Dorsolateral prefrontal cortex (tissue), 120 donors: ENCODE measurements at regions of chr1 and their contacts with region 1.

Region 1: GRCh38 chr1:153220606-153221303 is 3.4 kb downstream of the PRR9 start:
- DNase-seq: peak in 6 of 10 donors; percentile 5 to 48 (median 42)
- H3K4me3 ChIP-seq: no peak overlapping the region
- H3K27ac ChIP-seq: peak overlapping the region in 1 of 59 donors; percentile 22
- H3K27me3 ChIP-seq: peaks cover 0 to 5% (median 0%) of the 10 kb centered on the region in 45 donors
- CTCF ChIP-seq: peak in 10 of 56 donors; percentile 9 to 45 (median 20)

Region 2: DNA sequence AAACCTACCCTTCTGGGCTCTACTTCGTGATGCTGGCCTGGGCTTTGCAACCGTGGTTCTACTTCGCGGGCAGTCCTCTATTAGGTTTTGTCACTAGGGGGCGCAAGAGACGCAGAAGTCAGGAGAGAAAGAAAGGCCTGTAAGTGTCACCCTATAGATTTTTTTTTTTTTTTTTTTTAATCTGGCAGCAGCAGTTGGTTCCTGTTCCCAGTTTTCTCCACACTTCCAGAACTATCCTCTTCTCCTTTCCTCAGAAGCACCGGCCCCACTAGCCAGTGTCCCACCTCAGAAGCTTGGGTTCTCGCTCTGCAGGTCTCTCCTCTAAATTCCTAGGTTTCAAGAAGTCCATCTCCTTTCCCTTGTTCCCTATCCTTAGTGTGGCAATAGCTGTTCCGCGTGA is 566.6 kb before region 1 on chr1:
- intact Hi-C with region 1: loop called in 1 of 2 experiments (anchors 5 kb)
- DNase-seq: peak in 8 of 10 donors; percentile 6 to 70 (median 45)
- H3K4me3 ChIP-seq: no peak overlapping the region
- H3K27ac ChIP-seq: no peak overlapping the region
- H3K27me3 ChIP-seq: peaks cover 0 to 6% (median 0%) of the 10 kb centered on the region in 45 donors
- CTCF ChIP-seq: peak; percentile 20 to 74 (median 60)

Region 3: DNA sequence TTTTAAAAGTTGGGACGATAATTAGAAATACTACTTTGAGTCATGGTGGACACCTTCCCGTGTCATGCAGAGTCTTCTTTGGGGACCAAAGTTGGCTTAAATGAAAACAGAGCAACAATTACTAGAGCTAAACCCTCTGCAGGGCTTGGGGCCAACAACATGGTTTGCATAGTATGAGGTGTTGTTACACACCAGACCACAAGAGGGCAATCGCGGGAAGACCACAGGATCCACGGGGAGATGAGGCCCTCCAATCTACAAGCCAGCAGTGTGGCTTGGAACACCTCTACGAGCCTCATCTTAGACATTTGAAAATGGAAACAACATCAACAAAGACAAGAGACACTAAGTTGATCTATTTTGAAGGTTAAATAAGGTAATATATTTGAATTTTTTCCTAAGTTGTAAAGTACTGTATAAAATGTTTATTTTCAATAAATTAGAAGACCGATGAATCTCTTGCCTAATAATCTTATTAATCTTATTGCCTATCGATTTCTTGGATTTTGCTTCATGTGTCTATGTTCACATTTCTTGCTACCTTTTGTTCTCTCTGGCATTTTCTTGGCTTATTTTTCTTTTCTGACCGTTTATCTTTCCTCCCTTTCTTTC is 350.8 kb before region 1 on chr1:
- intact Hi-C with region 1: loop called (anchors 2 to 10 kb)
- DNase-seq: peak in 8 of 10 donors; percentile 10 to 70 (median 60)
- H3K4me3 ChIP-seq: no peak overlapping the region
- H3K27ac ChIP-seq: no peak overlapping the region
- H3K27me3 ChIP-seq: peaks cover 0 to 6% (median 0%) of the 10 kb centered on the region in 45 donors
- CTCF ChIP-seq: peak; percentile 57 to 89 (median 78)

Region 4: GRCh38 chr1:152917794-152918193 is 303.0 kb before region 1 on chr1:
- intact Hi-C with region 1: loop called in 1 of 2 experiments (anchors 5 kb)
- DNase-seq: no peak
- H3K4me3 ChIP-seq: no peak overlapping the region
- H3K27ac ChIP-seq: no peak overlapping the region
- H3K27me3 ChIP-seq: peaks cover 0 to 14% (median 0%) of the 10 kb centered on the region in 45 donors
- CTCF ChIP-seq: peak in 38 of 56 donors; percentile 14 to 78 (median 39)

Region 5: DNA sequence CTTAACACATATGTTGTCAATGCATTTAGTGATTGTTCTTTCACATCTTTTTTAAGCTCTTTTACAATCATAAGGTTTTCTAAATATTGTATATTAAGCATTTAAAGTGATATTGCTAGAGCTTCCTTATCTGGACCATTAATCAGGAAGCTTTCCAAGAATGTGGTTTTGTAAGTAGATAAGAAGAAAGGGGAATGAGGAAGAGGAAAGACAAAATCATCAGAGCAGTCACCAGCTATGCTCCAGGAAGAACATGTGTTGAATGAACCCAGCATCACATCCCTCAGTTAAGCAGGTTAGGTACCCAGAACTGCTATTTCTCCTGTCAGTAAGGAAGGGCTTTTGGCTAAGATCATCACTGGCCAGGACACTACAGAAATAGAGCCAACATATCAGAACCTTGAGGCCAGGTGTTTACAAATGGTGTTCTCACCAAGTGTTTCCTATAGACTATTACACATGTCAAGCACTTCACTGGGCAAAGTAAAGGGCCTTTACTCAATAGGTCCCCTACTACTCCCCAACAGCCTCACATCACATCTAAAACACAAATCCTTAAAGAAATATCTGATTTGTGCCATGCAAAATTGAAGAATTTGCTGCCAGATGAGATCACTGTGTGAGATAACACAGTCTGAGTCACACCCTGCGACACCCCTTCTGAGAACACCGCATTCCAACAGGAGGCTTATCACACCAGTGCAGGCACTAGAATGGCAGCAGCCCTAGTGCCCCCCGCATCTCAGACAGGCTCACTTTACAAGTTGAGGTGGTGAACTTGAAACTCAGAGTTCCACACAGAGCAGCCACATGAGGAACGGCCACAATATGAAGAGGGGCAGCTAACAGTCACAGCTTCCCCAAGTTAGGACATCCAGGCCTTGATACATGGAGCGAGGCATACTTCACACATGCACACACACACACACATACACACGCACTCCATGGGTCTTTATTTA is 161.7 kb before region 1 on chr1:
- intact Hi-C with region 1: loop called in 1 of 2 experiments (anchors 10 kb)
- DNase-seq: no peak
- H3K4me3 ChIP-seq: no peak overlapping the region
- H3K27ac ChIP-seq: no peak overlapping the region
- H3K27me3 ChIP-seq: peaks cover 0 to 39% (median 3%) of the 10 kb centered on the region in 45 donors
- CTCF ChIP-seq: no peak